SK-N-SH (cell line): ENCODE measurements at regions of chr12 and their contacts with region 1.

Region 1: DNA sequence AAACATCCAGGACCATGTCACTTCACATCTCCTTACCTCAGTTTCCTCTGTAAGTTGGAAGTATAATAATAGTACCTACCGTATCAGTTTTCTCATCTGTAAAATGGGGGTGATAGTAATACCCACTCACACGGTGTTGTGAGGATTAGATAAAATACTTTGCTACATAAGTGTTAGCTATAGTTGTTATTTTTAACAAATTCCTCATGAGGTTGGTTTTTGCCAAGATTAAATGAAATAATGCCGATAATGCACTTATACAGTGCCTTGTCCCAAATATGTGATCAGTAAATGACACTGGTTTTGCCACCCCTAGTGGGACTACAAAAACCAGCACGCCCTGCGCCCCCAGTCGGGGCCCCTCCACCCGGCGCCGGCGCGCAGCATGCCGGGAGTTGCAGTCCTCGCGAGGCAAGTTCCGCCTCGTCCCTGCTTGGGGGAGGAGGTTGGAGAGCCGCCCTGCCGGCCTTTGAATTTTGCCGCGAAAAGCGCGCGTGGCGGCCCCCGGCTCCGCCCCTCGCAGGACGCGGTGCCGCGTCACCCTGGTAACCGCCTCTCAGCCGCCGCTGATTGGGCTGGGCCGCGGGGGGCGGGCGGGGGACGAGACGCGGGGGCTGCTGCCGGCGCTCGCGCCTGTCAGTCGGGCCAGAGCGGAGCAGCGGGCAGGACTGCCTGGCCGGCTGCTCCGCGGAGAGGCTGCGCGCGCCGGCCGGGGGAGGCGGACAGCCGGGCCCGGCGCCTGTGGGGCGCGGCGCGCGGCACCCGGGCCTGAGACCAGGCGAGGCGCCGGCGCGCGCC is at the start of gene FAM222A:
- DNase-seq: peak; percentile 97
- H3K4me3 ChIP-seq: peak within 1 kb of the TSS; percentile 62 to 70
- H3K27ac ChIP-seq: peak within 1 kb of the TSS in 1 of 2 experiments; percentile 92; a peak in 2 of 4 replicates
- H3K4me1 ChIP-seq: peaks cover 0 to 39% of the 10 kb centered on the region in 2 experiments; a peak in 1 of 4 replicates
- H3K27me3 ChIP-seq: no peaks in the 10 kb centered on the region; the same call in none of the 2 replicates
- CTCF ChIP-seq: no peak
- EP300 ChIP-seq: no peak
- RAD21 ChIP-seq: no peak
- polyA plus RNA-seq, gene FAM222A: 1.6 and 4.2 TPM in 2 replicates

Region 2: GRCh38 chr12:109518820-109519665 is 194.3 kb before region 1 on chr12:
- CTCF ChIA-PET with region 1: interaction called, 8 read pairs
- POLR2A ChIA-PET with region 1: interaction called, 11 read pairs
- DNase-seq: peak; percentile 81
- H3K4me3 ChIP-seq: peak overlapping the region in 1 of 2 experiments; percentile 26; a peak in 1 of 4 replicates
- H3K27ac ChIP-seq: peak overlapping the region; percentile 57 to 89
- H3K4me1 ChIP-seq: peaks cover 14 to 52% of the 10 kb centered on the region in 2 experiments; a peak in 3 of 4 replicates
- H3K27me3 ChIP-seq: no peaks in the 10 kb centered on the region
- CTCF ChIP-seq: peak; percentile 93
- EP300 ChIP-seq: no peak
- RAD21 ChIP-seq: peak; percentile 96

Region 3: GRCh38 chr12:109645194-109645593 is 68.2 kb before region 1 on chr12:
- CTCF ChIA-PET with region 1: interaction called, 9 read pairs
- POLR2A ChIA-PET with region 1: interaction called, 14 read pairs
- DNase-seq: peak; percentile 70
- H3K4me3 ChIP-seq: no peak overlapping the region
- H3K27ac ChIP-seq: peak overlapping the region in 1 of 2 experiments; percentile 95; a peak in 2 of 4 replicates
- H3K4me1 ChIP-seq: peaks cover 0 to 55% of the 10 kb centered on the region in 2 experiments; a peak in 2 of 4 replicates
- H3K27me3 ChIP-seq: no peaks in the 10 kb centered on the region; the same call in 1 of the 2 replicates
- CTCF ChIP-seq: no peak
- EP300 ChIP-seq: peak in 1 of 2 experiments; percentile 62; a peak in 1 of 4 replicates
- RAD21 ChIP-seq: peak; percentile 6; the same call in 1 of the 2 replicates

Region 4: DNA sequence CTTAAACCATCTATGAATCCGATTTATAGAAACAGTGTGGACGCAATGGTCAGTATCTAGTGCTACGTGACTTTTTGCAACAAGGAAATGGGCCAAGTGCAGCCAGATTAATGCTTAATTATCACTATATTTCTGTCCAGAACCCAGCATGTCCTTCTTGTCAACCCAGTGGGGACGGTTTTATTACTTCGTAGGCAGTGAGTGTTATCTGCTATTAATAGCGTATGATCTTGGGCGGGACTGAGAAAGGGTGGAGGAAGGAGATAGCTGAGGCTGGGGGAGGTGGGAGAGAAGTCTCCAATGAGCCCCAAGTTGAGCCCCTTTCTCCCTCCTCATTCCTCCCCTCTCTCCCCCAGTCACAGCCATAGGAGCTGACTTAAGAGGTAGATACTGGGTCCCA is 59.5 kb before region 1 on chr12:
- CTCF ChIA-PET with region 1: interaction called, 27 read pairs
- POLR2A ChIA-PET with region 1: interaction called, 82 read pairs
- DNase-seq: no peak
- H3K4me3 ChIP-seq: no peak overlapping the region
- H3K27ac ChIP-seq: peak overlapping the region in 1 of 2 experiments; percentile 96; a peak in 3 of 4 replicates
- H3K4me1 ChIP-seq: peaks cover 0 to 68% of the 10 kb centered on the region in 2 experiments; a peak in 2 of 4 replicates
- H3K27me3 ChIP-seq: peaks cover 14% of the 10 kb centered on the region; the same call in 1 of the 2 replicates
- CTCF ChIP-seq: no peak
- EP300 ChIP-seq: no peak; a peak in 1 of 4 replicates
- RAD21 ChIP-seq: no peak

Region 5: GRCh38 chr12:109685574-109686447 is 27.6 kb before region 1 on chr12:
- CTCF ChIA-PET with region 1: no interaction called
- POLR2A ChIA-PET with region 1: no interaction called
- DNase-seq: no peak
- H3K4me3 ChIP-seq: no peak overlapping the region
- H3K27ac ChIP-seq: no peak overlapping the region
- H3K4me1 ChIP-seq: no peaks in the 10 kb centered on the region
- H3K27me3 ChIP-seq: no peaks in the 10 kb centered on the region
- CTCF ChIP-seq: no peak
- EP300 ChIP-seq: no peak
- RAD21 ChIP-seq: no peak

Region 6: DNA sequence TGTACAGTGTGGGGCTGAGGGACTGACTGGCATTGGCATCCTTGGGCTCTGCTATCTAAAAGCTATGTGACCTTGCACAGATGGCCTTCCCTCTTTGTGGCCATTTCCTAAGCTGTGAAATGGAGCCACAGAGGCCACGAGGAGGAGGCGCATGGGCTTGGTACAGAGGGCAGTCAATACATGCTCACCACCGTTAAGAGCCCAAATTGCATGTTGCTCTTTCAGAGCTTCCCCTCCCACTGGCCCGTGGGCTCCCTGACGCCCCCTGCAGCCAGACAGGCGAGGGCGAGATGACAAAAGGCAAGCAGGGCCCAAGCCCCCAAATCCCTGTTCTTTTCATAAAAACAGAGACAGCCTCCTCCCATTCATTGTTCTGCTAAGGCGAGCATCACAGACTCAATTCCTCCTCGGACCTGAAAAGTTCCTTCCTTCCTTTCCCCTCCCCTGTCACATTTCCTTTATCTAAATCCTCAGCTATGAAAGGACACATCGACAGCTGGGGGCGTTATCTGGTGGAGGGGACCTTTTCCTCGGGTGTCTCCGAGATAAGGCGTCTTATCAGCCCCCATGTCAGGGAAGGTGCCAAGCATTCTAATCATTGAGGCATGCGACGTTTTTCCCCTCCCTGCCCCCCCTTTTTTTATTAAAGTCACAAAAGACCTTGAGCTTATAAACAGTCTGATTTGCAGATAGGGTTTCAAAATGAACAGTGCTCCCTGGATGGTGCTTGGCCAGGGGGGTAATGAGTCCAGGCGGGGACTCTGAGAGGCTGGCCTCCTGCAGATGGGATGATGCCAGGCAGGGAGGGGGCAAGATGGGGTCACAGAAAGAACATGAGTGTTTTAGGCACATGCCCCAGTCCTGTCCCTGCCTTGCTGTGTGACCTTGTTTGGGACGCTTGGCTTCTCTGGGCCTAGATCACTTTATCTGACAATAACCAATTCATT is 26.6 kb after region 1 on chr12:
- CTCF ChIA-PET with region 1: interaction called, 12 read pairs
- POLR2A ChIA-PET with region 1: interaction called, 3 read pairs
- DNase-seq: peak; percentile 59
- H3K4me3 ChIP-seq: no peak overlapping the region
- H3K27ac ChIP-seq: peak overlapping the region in 1 of 2 experiments; percentile 66; a peak in 2 of 4 replicates
- H3K4me1 ChIP-seq: peaks cover 0 to 98% of the 10 kb centered on the region in 2 experiments; a peak in 2 of 4 replicates
- H3K27me3 ChIP-seq: no peaks in the 10 kb centered on the region
- CTCF ChIP-seq: peak; percentile 33; the same call in 1 of the 2 replicates
- EP300 ChIP-seq: peak in 1 of 2 experiments; percentile 52; a peak in 1 of 4 replicates
- RAD21 ChIP-seq: peak; percentile 41